ENCODE measurements at regions of chr1 and their contacts with region 1.

Region 1: DNA sequence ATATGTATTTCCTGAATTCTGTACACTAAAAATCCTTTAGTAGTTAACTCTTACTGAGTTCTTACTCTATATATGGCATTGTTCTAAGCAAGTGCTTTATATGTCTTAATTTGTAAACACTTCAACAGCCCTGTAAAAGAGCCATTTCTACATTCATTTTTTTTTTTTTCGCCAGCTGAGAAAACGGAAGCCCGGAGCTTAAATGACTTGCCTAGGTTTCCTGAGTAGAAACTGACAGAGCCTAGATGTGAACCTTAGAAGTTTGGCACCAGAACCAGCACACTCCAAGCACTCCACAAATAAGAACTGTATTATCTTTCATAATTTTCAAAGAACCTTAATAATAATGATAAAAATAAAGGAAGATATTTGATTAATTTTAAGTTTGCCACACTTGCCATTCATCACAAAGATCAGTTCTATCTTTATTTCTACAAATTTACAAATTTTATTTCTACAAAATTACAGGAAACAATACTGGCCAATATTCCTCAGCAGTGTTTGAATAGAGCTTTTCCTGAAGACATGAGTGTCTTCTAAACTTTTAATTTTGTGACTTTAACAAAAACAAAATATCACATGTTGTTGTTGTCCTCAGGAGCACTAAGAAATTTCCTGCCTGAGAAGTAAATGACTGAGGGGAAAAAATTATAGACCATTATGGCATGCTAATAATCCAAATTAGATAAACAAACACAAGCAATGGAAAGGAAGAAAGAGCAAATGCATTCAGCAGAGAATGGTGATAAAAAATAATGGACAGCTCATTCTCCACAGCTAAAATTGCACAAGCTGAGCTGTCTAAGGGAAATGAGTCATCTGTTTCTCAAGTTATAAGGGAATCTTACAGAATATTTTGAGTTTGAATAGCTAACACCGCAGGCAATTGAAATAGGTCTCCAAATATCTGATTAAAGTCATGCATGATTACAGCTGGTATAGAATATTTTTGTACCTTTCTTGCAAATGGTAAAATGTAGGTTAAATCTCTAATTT is 71.2 kb downstream of the DPYD start:
- DNase-seq: peak; percentile 66 to 94 (median 87)
- H3K4me3 ChIP-seq: peak overlapping the region; percentile 14 to 71 (median 27)
- H3K4me3 Mint-ChIP-seq: peak overlapping the region; percentile 49 to 88
- H3K27ac ChIP-seq: peak overlapping the region in 1 of 2 donors; percentile 85
- H3K27ac Mint-ChIP-seq: peak overlapping the region; percentile 90 to 95 (median 94)
- H3K4me1 ChIP-seq: peaks cover 28 to 52% of the 10 kb centered on the region in 2 donors
- H3K4me1 Mint-ChIP-seq: peaks cover 46% of the 10 kb centered on the region
- H3K27me3 ChIP-seq: no peaks in the 10 kb centered on the region
- H3K27me3 Mint-ChIP-seq: peaks cover 0 to 4% (median 2%) of the 10 kb centered on the region in 3 donors
- CTCF ChIP-seq: no peak

Region 2: DNA sequence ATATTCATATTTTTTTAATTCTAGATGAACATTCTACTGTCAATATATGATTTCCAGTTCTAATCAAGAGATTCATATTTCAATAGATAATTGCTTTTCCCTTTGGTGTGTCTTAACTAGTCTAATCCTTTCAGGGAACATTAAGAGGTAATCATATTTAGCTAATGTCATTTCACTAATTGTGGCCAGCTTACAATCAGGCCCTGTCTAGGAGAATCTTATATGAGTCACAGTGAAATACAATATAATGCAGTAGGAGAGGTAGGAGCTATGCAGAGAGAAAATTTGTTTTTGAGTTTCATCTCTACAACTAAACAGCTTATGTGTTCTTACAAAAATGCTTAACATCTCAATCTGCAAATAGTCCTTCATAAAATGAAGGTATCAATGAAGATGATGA is 14.7 kb before region 1 on chr1:
- intact Hi-C with region 1: no loop called
- DNase-seq: no peak
- H3K4me3 ChIP-seq: no peak overlapping the region
- H3K4me3 Mint-ChIP-seq: no peak overlapping the region
- H3K27ac ChIP-seq: no peak overlapping the region
- H3K27ac Mint-ChIP-seq: peak overlapping the region in 1 of 7 donors; percentile 52
- H3K4me1 ChIP-seq: peaks cover 12 to 21% of the 10 kb centered on the region in 2 donors
- H3K4me1 Mint-ChIP-seq: peaks cover 35% of the 10 kb centered on the region
- H3K27me3 ChIP-seq: no peaks in the 10 kb centered on the region
- H3K27me3 Mint-ChIP-seq: no peaks in the 10 kb centered on the region
- CTCF ChIP-seq: no peak

Region 3: GRCh38 chr1:97906567-97907241 is 57.1 kb after region 1 on chr1:
- intact Hi-C with region 1: loop called (anchors 5 to 10 kb)
- DNase-seq: peak; percentile 86 to 96 (median 96)
- H3K4me3 ChIP-seq: peak overlapping the region in 2 of 3 experiments; percentile 25 to 38
- H3K4me3 Mint-ChIP-seq: peak overlapping the region in 1 of 2 donors; percentile 71
- H3K27ac ChIP-seq: peak overlapping the region; percentile 24 to 86
- H3K27ac Mint-ChIP-seq: no peak overlapping the region
- H3K4me1 ChIP-seq: peaks cover 78 to 99% of the 10 kb centered on the region in 2 donors
- H3K4me1 Mint-ChIP-seq: peaks cover 33% of the 10 kb centered on the region
- H3K27me3 ChIP-seq: no peaks in the 10 kb centered on the region
- H3K27me3 Mint-ChIP-seq: no peaks in the 10 kb centered on the region
- CTCF ChIP-seq: no peak

Measured in CD14-positive monocyte (primary cell).